CD8-positive, alpha-beta T cell (primary cell): ENCODE measurements at regions of chr4 and their contacts with region 1.

Region 1: GRCh38 chr4:115234405-115235093 is 121.1 kb upstream of the NDST4 start:
- DNase-seq: peak in 2 of 9 experiments; percentile 15 to 24
- ATAC-seq: no peak
- H3K4me3 ChIP-seq: no peak overlapping the region
- H3K4me3 Mint-ChIP-seq: no peak overlapping the region
- H3K27ac ChIP-seq: no peak overlapping the region
- H3K27ac Mint-ChIP-seq: no peak overlapping the region
- H3K4me1 ChIP-seq: no peaks in the 10 kb centered on the region
- H3K4me1 Mint-ChIP-seq: no peaks in the 10 kb centered on the region
- H3K27me3 ChIP-seq: no peaks in the 10 kb centered on the region
- H3K27me3 Mint-ChIP-seq: no peaks in the 10 kb centered on the region
- CTCF ChIP-seq: no peak

Region 2: DNA sequence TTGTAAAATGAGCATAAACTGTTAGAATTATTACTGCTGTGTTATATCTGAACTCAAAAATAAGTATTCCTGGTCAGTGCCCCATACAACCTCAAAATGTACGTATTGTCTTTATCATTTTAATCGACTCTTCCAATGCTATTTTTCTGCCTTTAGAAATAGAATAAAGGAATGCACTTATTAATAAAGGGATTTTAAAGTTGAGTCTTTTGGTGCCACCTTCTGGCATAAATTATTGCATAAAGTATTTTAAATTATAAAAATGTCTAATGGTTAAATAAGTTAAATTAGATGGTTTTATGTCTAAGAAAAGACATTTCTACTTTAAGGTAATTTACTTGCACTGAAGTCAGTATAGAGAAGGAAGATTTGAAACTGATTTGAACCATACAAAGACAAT is 302.8 kb after region 1 on chr4:
- CTCF ChIA-PET with region 1: no interaction called
- POLR2A ChIA-PET with region 1: no interaction called
- intact Hi-C with region 1: loop called in 1 of 2 experiments (anchors 10 kb)
- DNase-seq: no peak
- ATAC-seq: no peak
- H3K4me3 ChIP-seq: no peak overlapping the region
- H3K4me3 Mint-ChIP-seq: no peak overlapping the region
- H3K27ac ChIP-seq: no peak overlapping the region
- H3K27ac Mint-ChIP-seq: no peak overlapping the region
- H3K4me1 ChIP-seq: no peaks in the 10 kb centered on the region
- H3K4me1 Mint-ChIP-seq: no peaks in the 10 kb centered on the region
- H3K27me3 ChIP-seq: no peaks in the 10 kb centered on the region
- H3K27me3 Mint-ChIP-seq: no peaks in the 10 kb centered on the region
- CTCF ChIP-seq: no peak